Naive thymus-derived CD4-positive, alpha-beta T cell (primary cell): ENCODE measurements at regions of chr19 and their contacts with region 1.

Region 1: DNA sequence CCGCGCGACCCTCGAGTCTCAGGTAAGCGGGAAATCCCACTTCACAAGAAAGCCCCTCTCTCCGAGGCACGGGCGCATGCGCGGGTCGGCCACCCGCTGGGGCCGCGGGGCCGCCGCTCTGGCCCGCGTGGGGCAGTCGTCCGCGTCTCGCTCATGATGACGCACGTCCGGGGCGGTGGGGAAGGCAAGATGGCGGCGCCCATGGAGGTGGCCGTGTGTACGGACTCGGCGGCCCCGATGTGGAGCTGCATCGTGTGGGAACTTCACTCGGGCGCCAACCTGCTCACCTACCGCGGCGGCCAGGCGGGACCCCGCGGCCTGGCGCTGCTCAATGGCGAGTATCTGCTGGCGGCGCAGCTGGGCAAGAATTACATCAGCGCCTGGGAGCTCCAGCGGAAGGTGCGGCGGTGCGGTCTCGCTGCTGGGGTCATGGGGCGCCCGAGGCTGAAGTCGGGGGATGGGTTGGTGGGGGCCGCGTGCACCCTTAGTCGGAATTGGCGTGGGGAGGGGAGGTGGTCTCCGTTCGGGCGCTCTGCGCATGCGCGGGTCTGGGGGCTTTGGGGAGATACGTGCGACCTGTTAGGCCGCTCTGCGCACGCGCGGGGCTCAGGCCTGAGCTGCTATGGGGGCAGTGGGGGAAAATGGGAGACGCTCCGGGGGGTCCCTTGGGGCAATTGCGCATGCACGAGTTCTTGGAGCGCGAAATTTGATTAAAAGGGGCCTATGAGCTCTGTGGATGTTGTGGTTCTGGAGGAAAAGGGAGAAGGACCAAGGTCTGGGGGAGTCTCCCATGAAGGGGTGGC is at the start of gene WDR18:
- DNase-seq: peak; percentile 62 to 93 (median 76)
- ATAC-seq: peak; percentile 93
- H3K4me3 ChIP-seq: peak within 1 kb of the TSS; percentile 56
- H3K4me3 Mint-ChIP-seq: peak within 1 kb of the TSS; percentile 78 to 98 (median 92)
- H3K27ac ChIP-seq: peak within 1 kb of the TSS; percentile 99
- H3K27ac Mint-ChIP-seq: peak within 1 kb of the TSS; percentile 80 to 94 (median 90)
- H3K4me1 ChIP-seq: peaks cover 4 to 17% of the 10 kb centered on the region in 2 donors
- H3K4me1 Mint-ChIP-seq: peaks cover 6 to 21% (median 17%) of the 10 kb centered on the region in 7 donors
- H3K27me3 ChIP-seq: no peaks in the 10 kb centered on the region
- H3K27me3 Mint-ChIP-seq: no peaks in the 10 kb centered on the region
- total RNA-seq, gene WDR18: 20.7 to 63.8 (median 48.5) TPM

Region 2: DNA sequence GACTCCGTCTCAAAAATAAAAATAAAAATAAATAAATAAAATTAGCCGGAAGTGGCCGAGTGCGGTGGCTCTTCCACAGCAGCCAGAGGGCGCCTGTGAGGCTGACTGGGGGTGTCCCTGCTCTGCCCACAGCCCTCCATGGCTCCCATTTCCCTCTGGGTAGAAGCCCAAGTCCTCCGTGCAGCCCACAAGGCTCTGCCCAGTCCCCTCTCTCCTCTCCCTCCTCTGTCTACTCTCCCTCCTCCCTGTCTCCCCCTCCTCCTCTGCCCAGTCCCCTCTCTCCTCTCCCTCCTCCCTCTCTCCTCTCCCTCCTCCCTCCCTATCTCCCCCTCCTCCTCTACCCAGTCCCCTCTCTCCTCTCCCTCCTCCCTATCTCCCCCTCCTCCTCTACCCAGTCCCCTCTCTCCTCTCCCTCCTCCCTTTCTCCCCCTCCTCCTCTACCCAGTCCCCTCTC is 213.0 kb before region 1 on chr19:
- CTCF ChIA-PET with region 1: interaction called, 11 read pairs
- POLR2A ChIA-PET with region 1: no interaction called
- intact Hi-C with region 1: loop called (anchors 1 to 10 kb)
- DNase-seq: no peak
- ATAC-seq: peak; percentile 67
- H3K4me3 ChIP-seq: no peak overlapping the region
- H3K4me3 Mint-ChIP-seq: no peak overlapping the region
- H3K27ac ChIP-seq: no peak overlapping the region
- H3K27ac Mint-ChIP-seq: no peak overlapping the region
- H3K4me1 ChIP-seq: no peaks in the 10 kb centered on the region
- H3K4me1 Mint-ChIP-seq: peaks cover 0 to 4% (median 0%) of the 10 kb centered on the region in 7 donors
- H3K27me3 ChIP-seq: no peaks in the 10 kb centered on the region
- H3K27me3 Mint-ChIP-seq: peaks cover 0 to 8% (median 4%) of the 10 kb centered on the region in 5 donors

Region 3: DNA sequence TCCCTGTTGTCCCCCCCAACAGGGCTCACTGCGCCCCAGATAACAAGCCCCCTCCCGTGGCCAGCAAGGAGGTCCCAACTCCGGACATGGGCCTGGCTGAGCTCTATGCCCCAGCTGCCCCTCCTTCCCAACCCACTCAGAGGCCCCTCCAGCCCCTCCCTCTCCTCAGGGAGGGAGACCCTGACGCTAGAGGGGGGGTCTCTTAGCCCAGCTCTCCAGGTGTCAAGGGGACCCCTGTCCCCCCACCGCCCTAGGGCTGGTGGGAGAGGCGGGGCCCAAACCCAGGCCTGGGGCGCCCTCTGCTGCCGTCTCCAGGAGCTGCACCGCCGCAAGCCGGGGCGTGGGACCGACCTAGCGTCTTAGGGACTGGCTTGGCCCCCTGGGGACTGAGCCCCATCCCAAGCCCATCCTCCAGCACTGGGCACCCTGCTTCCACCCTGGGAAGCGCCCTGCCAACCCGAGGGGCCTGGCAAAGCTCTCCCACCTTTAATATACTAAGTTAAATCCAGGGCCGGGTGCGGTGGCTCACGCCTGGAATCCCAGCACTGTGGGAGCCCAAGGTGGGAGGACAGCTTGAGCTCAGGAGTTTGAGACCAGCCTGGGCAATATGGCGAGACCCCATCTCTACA is 17.3 kb after region 1 on chr19:
- CTCF ChIA-PET with region 1: interaction called, 6 read pairs
- POLR2A ChIA-PET with region 1: interaction called, 3 read pairs
- intact Hi-C with region 1: loop called in 1 of 2 experiments (anchors 1 kb)
- DNase-seq: peak; percentile 45 to 82 (median 70)
- ATAC-seq: peak; percentile 83
- H3K4me3 ChIP-seq: no peak overlapping the region
- H3K4me3 Mint-ChIP-seq: peak overlapping the region in 4 of 10 donors; percentile 21 to 75 (median 44)
- H3K27ac ChIP-seq: no peak overlapping the region
- H3K27ac Mint-ChIP-seq: peak overlapping the region in 1 of 9 donors; percentile 24
- H3K4me1 ChIP-seq: peaks cover 14 to 17% of the 10 kb centered on the region in 2 donors
- H3K4me1 Mint-ChIP-seq: peaks cover 1 to 13% (median 7%) of the 10 kb centered on the region in 7 donors
- H3K27me3 ChIP-seq: peaks cover 5 to 6% of the 10 kb centered on the region in 2 donors
- H3K27me3 Mint-ChIP-seq: peaks cover 7 to 39% (median 20%) of the 10 kb centered on the region in 5 donors